HepG2 (cell line): ENCODE measurements at regions of chr12 and their contacts with region 1.

Region 1: DNA sequence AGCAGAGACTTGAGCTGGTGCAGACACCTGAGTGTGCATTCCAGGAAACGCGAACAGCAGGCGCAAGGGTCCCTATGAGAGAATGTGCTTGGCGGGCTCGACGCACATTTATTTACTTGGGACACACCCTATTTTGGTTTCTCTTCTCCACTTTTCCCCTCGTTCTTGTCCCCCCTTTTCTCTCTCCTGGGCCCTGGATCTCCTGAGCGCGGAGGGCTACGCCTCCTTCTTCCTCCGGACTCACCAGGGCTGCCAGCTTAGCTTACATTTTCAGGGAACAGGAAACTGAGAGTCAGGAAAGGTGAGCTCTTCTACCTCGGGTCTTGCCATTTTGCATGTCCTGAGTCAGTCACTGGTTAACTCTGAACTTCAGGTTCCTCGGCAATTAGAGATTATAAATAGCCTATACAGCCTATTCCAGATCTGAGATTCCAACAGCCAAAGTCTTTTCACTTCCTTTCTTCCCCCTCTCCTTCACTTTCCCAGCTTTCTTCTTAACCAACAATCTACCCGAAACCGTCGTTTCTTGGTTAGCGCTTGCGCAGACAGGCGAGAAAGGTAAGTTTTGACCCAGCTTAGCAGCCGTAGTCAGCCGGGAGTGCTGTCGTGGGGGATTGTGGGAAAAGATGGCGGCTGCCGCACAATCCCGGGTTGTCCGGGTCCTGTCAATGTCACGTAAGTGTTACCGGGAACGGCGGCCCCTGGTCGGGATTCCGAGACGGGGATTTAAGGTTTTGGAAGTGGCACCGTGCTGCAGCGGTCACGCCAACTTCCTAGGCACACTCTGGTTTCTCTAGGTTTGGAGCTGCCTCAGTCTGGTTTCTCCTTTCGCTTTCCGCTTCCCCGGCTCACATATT is at the starts of genes AKAP3 and NDUFA9:
- DNase-seq: peak; percentile 72
- ATAC-seq: peak; percentile 99
- H3K4me3 ChIP-seq: peak within 1 kb of the TSS; percentile 83 to 97 (median 87)
- H3K27ac ChIP-seq: peak within 1 kb of the TSS; percentile 67
- H3K4me1 ChIP-seq: peaks cover 39% of the 10 kb centered on the region
- H3K27me3 ChIP-seq: no peaks in the 10 kb centered on the region; a peak in 2 of 5 replicates
- CTCF ChIP-seq: no peak
- EP300 ChIP-seq: no peak
- POLR2A ChIP-seq: peak; percentile 67 to 89
- RAD21 ChIP-seq: no peak
- total RNA-seq, gene AKAP3: 0.49 and 0.84 TPM in 2 replicates
- total RNA-seq, gene NDUFA9: 143 and 150 TPM in 2 replicates

Region 2: DNA sequence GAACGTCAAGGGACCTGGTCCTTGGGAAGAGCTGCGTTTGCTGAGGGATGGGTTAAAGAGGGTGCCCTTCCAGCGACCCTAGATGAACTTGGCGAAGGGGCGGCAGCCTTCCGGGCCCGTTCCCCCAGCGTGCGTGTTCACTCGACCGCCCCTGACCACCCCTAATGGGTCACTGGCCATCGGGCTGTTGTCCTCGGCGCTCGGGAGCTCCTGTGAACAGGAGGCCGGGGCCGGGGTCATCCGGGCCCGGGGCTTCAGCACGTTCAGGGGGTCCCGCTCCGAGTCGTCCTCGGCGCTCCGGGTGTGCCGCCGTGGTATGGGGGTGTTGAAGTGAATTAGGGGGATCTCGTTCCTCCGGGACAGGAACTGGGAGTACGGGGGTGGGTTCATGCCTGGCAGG is 278.5 kb before region 1 on chr12:
- CTCF ChIA-PET with region 1: no interaction called
- POLR2A ChIA-PET with region 1: no interaction called
- in situ Hi-C with region 1: no loop called
- intact Hi-C with region 1: no loop called
- DNase-seq: no peak
- ATAC-seq: no peak
- H3K4me3 ChIP-seq: no peak overlapping the region
- H3K27ac ChIP-seq: no peak overlapping the region
- H3K4me1 ChIP-seq: peaks cover 6% of the 10 kb centered on the region
- H3K27me3 ChIP-seq: peaks cover 4 to 31% of the 10 kb centered on the region in 2 experiments; a peak in 3 of 5 replicates
- CTCF ChIP-seq: no peak
- EP300 ChIP-seq: no peak
- POLR2A ChIP-seq: no peak
- RAD21 ChIP-seq: no peak

Region 3: DNA sequence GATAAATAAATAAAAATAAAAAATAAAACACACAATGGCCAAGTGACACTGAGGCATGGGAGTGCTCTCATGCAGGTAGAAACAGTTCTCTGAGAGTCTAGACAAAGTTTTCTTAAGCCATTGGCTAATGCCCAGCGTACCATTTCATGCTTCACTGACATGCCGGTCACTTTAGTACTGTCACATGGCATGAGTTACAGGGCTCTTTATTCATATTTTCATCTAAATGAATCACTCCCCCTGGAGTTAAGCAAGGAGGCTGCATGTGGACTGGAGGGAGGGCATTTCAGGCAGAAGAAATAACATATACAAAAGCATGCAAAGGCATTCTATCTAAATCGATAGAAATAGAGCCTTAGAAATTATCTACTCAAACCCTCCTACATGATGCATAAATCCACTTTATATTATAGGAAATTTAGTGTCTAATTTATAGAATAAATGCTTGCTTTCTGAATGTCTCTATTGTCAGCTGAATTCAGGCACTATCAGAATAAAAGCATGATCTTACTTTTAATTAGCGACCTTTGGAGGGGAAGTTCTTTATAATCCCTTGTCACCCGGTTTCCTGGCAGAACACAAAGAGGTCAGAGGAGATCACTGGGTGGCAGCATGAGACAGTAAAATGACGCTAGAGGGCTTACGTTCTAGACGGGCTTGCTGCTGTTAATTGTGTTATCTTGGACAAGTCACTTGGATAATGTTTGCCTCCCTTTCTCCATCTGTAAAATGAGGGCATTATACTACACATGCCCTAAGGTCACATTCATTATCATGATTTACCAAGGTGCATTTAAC is 69.2 kb before region 1 on chr12:
- CTCF ChIA-PET with region 1: no interaction called
- POLR2A ChIA-PET with region 1: no interaction called
- in situ Hi-C with region 1: no loop called
- intact Hi-C with region 1: loop called (anchors 2 kb)
- DNase-seq: peak; percentile 17
- ATAC-seq: peak; percentile 80
- H3K4me3 ChIP-seq: no peak overlapping the region
- H3K27ac ChIP-seq: no peak overlapping the region
- H3K4me1 ChIP-seq: no peaks in the 10 kb centered on the region
- H3K27me3 ChIP-seq: peaks cover 3 to 22% of the 10 kb centered on the region in 2 experiments; a peak in 4 of 5 replicates
- CTCF ChIP-seq: peak; percentile 66
- EP300 ChIP-seq: no peak
- POLR2A ChIP-seq: no peak
- RAD21 ChIP-seq: peak; percentile 24; the same call in 1 of the 2 replicates

Region 4: GRCh38 chr12:4604684-4605193 is 44.0 kb before region 1 on chr12:
- CTCF ChIA-PET with region 1: no interaction called
- POLR2A ChIA-PET with region 1: interaction called, 4 read pairs
- in situ Hi-C with region 1: no loop called
- intact Hi-C with region 1: loop called (anchors 2 kb)
- DNase-seq: peak; percentile 78
- ATAC-seq: peak; percentile 97
- H3K4me3 ChIP-seq: peak overlapping the region; percentile 77 to 98 (median 91)
- H3K27ac ChIP-seq: no peak overlapping the region
- H3K4me1 ChIP-seq: peaks cover 14% of the 10 kb centered on the region
- H3K27me3 ChIP-seq: 0 out of 5 replicates have a peak, but pooled peaks cover 0 to 4% of the 10 kb centered on the region in 2 experiments
- CTCF ChIP-seq: peak; percentile 93
- EP300 ChIP-seq: no peak
- POLR2A ChIP-seq: peak; percentile 44 to 67; a peak in 3 of 4 replicates
- RAD21 ChIP-seq: no peak